ENCODE measurements at regions of chr6 and their contacts with region 1.

Region 1: GRCh38 chr6:78436335-78436734 is 431.0 kb upstream of the IRAK1BP1 start:
- DNase-seq: peak; percentile 1
- ATAC-seq: peak; percentile 38; the same call in 1 of the 3 replicates
- H3K4me3 ChIP-seq: no peak overlapping the region
- H3K27ac ChIP-seq: no peak overlapping the region
- H3K4me1 ChIP-seq: no peaks in the 10 kb centered on the region
- H3K27me3 ChIP-seq: no peaks in the 10 kb centered on the region
- CTCF ChIP-seq: no peak
- EP300 ChIP-seq: no peak
- POLR2A ChIP-seq: no peak
- RAD21 ChIP-seq: no peak

Region 2: GRCh38 chr6:78492351-78493017 is 56.1 kb after region 1 on chr6:
- CTCF ChIA-PET with region 1: no interaction called
- POLR2A ChIA-PET with region 1: no interaction called
- in situ Hi-C with region 1: no loop called
- intact Hi-C with region 1: no loop called
- DNase-seq: no peak
- ATAC-seq: no peak
- H3K4me3 ChIP-seq: no peak overlapping the region
- H3K27ac ChIP-seq: no peak overlapping the region
- H3K4me1 ChIP-seq: no peaks in the 10 kb centered on the region
- H3K27me3 ChIP-seq: no peaks in the 10 kb centered on the region
- CTCF ChIP-seq: no peak
- EP300 ChIP-seq: no peak
- POLR2A ChIP-seq: no peak
- RAD21 ChIP-seq: no peak

Region 3: GRCh38 chr6:78810146-78810545 is 373.8 kb after region 1 on chr6:
- CTCF ChIA-PET with region 1: no interaction called
- POLR2A ChIA-PET with region 1: no interaction called
- in situ Hi-C with region 1: no loop called
- intact Hi-C with region 1: loop called (anchors 5 kb)
- DNase-seq: peak; percentile 21
- ATAC-seq: peak; percentile 79
- H3K4me3 ChIP-seq: no peak overlapping the region
- H3K27ac ChIP-seq: no peak overlapping the region
- H3K4me1 ChIP-seq: no peaks in the 10 kb centered on the region
- H3K27me3 ChIP-seq: 0 out of 5 replicates have a peak, but pooled peaks cover 0 to 2% of the 10 kb centered on the region in 2 experiments
- CTCF ChIP-seq: peak; percentile 77
- EP300 ChIP-seq: no peak
- POLR2A ChIP-seq: no peak
- RAD21 ChIP-seq: 0 out of 2 replicates have a peak, but pooled peaks have one; percentile 23

Region 4: GRCh38 chr6:79064635-79065034 is 628.3 kb after region 1 on chr6:
- CTCF ChIA-PET with region 1: no interaction called
- POLR2A ChIA-PET with region 1: no interaction called
- in situ Hi-C with region 1: no loop called
- intact Hi-C with region 1: no loop called
- DNase-seq: no peak
- ATAC-seq: no peak
- H3K4me3 ChIP-seq: no peak overlapping the region
- H3K27ac ChIP-seq: no peak overlapping the region
- H3K4me1 ChIP-seq: no peaks in the 10 kb centered on the region
- H3K27me3 ChIP-seq: no peaks in the 10 kb centered on the region
- CTCF ChIP-seq: no peak
- EP300 ChIP-seq: no peak
- POLR2A ChIP-seq: no peak
- RAD21 ChIP-seq: no peak